ENCODE measurements at regions of chr5 and their contacts with region 1.

Region 1: DNA sequence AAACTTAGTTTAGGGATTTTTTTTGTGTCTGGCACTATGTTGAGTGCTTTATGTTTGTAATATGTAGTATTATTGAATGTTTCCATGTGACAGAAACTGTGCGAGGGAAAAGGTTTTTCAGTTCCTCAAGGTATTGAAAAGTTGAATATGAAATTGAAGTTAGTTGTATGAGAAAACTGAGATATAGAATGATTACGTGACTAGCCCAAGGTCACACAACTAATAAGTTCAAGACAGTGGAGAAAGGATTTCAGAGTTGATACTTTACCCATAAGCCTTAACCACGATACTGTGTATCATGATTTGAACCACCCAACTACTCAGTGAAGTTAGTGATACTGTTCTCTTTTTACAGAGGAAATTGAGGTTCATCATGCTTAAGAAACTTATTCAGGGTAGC is 5.7 kb downstream of the NIPBL start:
- DNase-seq: no peak
- ATAC-seq: peak; percentile 61
- H3K4me3 ChIP-seq: peak overlapping the region; percentile 48
- H3K27ac ChIP-seq: peak overlapping the region; percentile 63
- H3K4me1 ChIP-seq: peaks cover 6% of the 10 kb centered on the region; the same call in 1 of the 2 replicates
- H3K27me3 ChIP-seq: no peaks in the 10 kb centered on the region
- CTCF ChIP-seq: no peak
- EP300 ChIP-seq: 0 out of 4 replicates have a peak, but pooled peaks of 1 of the 2 experiments have one; percentile 33
- POLR2A ChIP-seq: no peak
- RAD21 ChIP-seq: no peak

Region 2: DNA sequence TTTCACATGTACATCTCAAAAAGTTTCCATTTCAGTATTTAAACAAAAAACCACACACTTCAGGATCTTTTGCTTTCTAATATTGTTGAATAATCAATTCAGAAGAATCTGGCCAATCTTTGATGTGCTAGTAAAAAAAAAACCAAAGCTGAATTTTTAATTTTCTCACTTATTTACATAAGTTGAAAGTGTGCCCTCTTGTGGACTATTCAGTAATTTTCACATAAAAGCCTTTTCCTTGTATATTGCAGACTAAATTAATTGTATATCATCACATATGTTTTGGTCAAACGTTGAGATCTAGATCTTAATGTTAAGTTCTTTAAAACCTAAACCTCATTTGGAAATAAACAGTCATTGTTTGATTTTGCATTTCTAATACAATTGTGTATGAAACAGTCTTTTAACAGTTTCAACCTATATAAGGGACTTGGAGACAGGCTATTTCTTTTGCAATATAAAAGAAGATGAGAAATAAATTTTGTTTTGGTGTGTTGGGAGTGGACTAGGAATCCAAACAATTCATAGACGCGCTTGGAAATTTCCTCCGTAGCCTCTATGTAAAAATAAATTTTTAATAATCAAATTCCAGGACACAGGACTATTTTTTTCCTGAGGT is 62.5 kb after region 1 on chr5:
- CTCF ChIA-PET with region 1: interaction called, 25 read pairs
- POLR2A ChIA-PET with region 1: no interaction called
- RAD21 ChIA-PET with region 1: interaction called, 35 read pairs
- SMC1A ChIA-PET with region 1: interaction called, 15 read pairs
- in situ Hi-C with region 1: no loop called
- intact Hi-C with region 1: loop called (anchors 1 kb)
- DNase-seq: no peak
- ATAC-seq: peak; percentile 38
- H3K4me3 ChIP-seq: no peak overlapping the region
- H3K27ac ChIP-seq: no peak overlapping the region
- H3K4me1 ChIP-seq: no peaks in the 10 kb centered on the region
- H3K27me3 ChIP-seq: no peaks in the 10 kb centered on the region
- CTCF ChIP-seq: peak in 2 of 3 experiments; percentile 44 to 47; a peak in 3 of 6 replicates
- EP300 ChIP-seq: no peak
- POLR2A ChIP-seq: no peak
- RAD21 ChIP-seq: peak; percentile 38; the same call in 1 of the 2 replicates